Ascending aorta (tissue), 2 donors: ENCODE measurements at regions of chr1 and their contacts with region 1.

Region 1: DNA sequence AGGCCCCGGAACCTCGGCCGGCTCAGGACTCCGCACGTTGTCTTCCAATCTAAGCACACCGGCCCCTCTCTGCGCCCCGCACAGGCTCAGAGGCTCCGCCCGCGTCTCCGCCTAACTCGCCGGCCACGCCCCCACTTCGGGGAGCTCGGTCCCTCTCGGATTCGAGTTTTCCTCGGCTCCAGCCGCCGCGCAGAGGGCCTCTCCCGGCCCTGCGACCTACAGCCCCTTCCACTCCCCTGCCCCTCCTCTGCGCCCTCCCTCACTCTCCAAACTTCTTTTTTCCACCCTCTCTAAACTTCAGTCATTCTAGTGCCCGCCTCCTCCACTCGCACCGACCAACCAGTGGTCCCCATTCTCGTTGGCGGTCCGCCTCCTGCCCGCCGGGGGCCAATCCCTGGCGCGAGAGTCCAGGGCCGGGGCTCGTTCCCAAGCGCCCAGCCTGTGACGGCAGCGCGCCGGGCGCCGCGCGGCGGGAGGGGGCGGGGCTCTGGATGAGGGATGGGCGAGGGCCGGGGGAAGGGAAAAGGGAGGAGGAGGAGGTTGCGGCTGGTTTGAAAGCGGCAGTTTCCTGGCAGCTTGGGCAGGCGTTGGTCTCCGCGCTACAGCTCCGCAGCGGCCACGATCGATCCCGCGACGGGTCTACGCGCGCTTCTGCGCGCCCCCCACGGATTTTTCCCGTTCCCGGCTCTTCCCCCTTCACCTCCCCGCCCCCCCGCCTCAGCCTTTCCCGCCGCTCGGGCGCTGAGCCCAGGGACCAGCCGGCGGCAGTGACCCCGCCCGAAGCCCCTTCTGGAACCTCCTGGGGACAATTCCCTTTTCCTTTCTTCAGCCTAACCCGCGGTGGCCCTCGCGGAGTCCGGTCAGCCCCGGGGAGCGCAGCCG is at the start of gene MAGI3:
- DNase-seq: peak; percentile 87 to 98
- H3K4me3 ChIP-seq: peak within 1 kb of the TSS; percentile 96 to 99
- H3K27ac ChIP-seq: peak within 1 kb of the TSS; percentile 89 to 91
- H3K4me1 ChIP-seq: peaks cover 5 to 6% of the 10 kb centered on the region in 2 donors
- H3K27me3 ChIP-seq: no peaks in the 10 kb centered on the region
- CTCF ChIP-seq: no peak
- total RNA-seq, gene MAGI3: 14.9 TPM

Region 2: GRCh38 chr1:113072757-113073478 is 317.3 kb before region 1 on chr1 and contains the start of gene LRIG2:
- intact Hi-C with region 1: loop called (anchors 5 kb)
- DNase-seq: peak; percentile 97 to 99
- H3K4me3 ChIP-seq: peak within 1 kb of the TSS; percentile 63 to 79
- H3K27ac ChIP-seq: peak within 1 kb of the TSS; percentile 84
- H3K4me1 ChIP-seq: peaks cover 3 to 8% of the 10 kb centered on the region in 2 donors
- H3K27me3 ChIP-seq: no peaks in the 10 kb centered on the region
- CTCF ChIP-seq: peak; percentile 77 to 87 (median 83)
- total RNA-seq, gene LRIG2: 16.1 TPM

Region 3: GRCh38 chr1:113307771-113308445 is 82.3 kb before region 1 on chr1:
- intact Hi-C with region 1: no loop called
- DNase-seq: no peak
- H3K4me3 ChIP-seq: no peak overlapping the region
- H3K27ac ChIP-seq: no peak overlapping the region
- H3K4me1 ChIP-seq: no peaks in the 10 kb centered on the region
- H3K27me3 ChIP-seq: no peaks in the 10 kb centered on the region
- CTCF ChIP-seq: no peak

Region 4: DNA sequence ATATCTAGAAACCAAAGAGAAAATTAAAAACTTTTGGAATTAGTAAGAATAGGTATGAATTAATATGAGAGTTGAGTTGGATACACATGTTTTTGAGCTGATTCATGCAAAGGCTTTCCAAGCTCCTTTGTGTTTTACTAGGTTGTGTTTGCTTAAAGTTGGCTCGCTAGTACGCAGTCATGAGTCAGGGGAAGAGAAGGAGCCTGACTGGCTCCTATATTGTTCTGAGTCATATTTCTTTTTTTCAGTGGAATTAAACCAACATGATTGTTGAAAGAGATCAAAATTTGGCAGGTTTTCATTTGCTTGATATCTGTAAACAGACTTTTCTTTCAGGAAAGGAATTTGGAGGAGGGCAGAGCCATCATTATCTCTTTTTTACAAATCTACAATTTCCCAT is 66.8 kb after region 1 on chr1:
- intact Hi-C with region 1: loop called (anchors 2 kb)
- DNase-seq: peak; percentile 9 to 69
- H3K4me3 ChIP-seq: peak overlapping the region in 1 of 2 donors; percentile 40
- H3K27ac ChIP-seq: peak overlapping the region in 1 of 2 donors; percentile 65
- H3K4me1 ChIP-seq: peaks cover 0 to 20% of the 10 kb centered on the region in 2 donors
- H3K27me3 ChIP-seq: no peaks in the 10 kb centered on the region
- CTCF ChIP-seq: no peak

Region 5: DNA sequence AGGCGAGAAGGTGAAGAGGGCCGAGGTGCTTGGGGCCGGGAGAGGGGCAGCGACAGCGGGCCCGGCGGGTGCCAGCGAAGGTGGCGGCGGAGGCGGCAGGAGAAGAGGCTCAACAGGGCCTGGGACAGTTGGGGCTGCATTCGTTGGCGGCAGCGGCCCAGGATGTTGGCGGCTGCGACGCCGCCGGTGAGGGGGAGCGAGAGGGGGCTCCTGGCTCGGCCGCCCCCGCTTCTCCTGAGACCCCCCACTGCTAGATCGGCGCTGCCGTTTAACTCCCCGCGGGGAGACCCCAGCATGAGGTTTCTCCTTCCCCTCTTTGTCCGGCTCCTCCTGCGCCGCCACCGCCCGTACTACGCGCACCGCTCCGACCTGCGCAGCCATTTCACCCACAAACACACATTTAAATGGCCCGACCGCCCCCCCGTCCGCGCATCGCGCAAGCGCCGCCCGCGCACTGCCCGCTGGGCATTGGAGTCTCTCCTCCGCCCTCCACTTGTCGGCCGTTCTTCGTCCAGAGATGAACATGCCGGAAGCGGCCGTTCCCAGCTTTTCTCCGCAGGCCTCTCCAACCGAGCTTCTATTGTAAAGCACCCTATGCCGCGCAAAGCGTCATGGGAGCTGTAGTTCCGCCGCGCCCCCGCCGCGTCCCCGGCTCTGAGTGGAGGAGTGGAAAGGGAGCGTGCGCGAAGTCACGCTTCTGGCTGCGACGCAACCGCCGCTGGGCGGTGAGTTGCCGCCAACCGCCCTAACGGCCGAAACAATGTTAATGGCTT is 421.9 kb after region 1 on chr1 and contains the start of gene RSBN1:
- intact Hi-C with region 1: loop called (anchors 2 kb)
- DNase-seq: peak; percentile 99 to 100
- H3K4me3 ChIP-seq: peak within 1 kb of the TSS; percentile 82 to 91
- H3K27ac ChIP-seq: peak within 1 kb of the TSS; percentile 95 to 97
- H3K4me1 ChIP-seq: peaks cover 0 to 5% of the 10 kb centered on the region in 2 donors
- H3K27me3 ChIP-seq: no peaks in the 10 kb centered on the region
- CTCF ChIP-seq: peak in 1 of 3 experiments; percentile 7
- total RNA-seq, gene RSBN1: 22.7 TPM